ENCODE measurements at regions of chr2 and their contacts with region 1.

Region 1: GRCh38 chr2:61470965-61471904 is at the start of gene USP34:
- DNase-seq: peak; percentile 88
- H3K4me3 Mint-ChIP-seq: peak within 1 kb of the TSS; percentile 95
- H3K27ac Mint-ChIP-seq: peak within 1 kb of the TSS; percentile 94
- H3K4me1 Mint-ChIP-seq: peaks cover 28% of the 10 kb centered on the region
- H3K27me3 Mint-ChIP-seq: no peaks in the 10 kb centered on the region
- total RNA-seq, gene USP34: 91.3 and 98.1 TPM in 2 replicates

Region 2: DNA sequence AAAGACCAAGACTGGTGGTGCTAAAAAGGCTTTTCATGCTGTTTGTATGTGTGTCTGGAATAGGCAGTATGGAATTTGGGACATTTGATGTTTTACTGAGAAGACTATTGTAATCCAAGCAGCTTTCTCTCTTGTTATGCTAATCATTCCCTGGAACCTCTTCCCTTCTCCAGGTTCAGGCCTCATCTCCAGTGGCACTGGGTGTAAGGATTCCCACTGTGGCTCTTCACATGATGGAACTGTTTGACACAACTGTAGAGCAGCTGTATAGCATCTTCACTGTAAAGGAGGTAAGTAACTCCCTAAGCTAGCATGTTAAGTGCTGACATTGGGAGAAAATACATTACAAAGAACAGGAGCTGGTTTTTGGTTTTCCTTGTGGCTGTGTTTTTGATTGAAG is 285.9 kb before region 1 on chr2:
- intact Hi-C with region 1: no loop called
- DNase-seq: no peak
- H3K4me3 Mint-ChIP-seq: no peak overlapping the region
- H3K27ac Mint-ChIP-seq: no peak overlapping the region
- H3K4me1 Mint-ChIP-seq: peaks cover 46% of the 10 kb centered on the region
- H3K27me3 Mint-ChIP-seq: no peaks in the 10 kb centered on the region

Region 3: DNA sequence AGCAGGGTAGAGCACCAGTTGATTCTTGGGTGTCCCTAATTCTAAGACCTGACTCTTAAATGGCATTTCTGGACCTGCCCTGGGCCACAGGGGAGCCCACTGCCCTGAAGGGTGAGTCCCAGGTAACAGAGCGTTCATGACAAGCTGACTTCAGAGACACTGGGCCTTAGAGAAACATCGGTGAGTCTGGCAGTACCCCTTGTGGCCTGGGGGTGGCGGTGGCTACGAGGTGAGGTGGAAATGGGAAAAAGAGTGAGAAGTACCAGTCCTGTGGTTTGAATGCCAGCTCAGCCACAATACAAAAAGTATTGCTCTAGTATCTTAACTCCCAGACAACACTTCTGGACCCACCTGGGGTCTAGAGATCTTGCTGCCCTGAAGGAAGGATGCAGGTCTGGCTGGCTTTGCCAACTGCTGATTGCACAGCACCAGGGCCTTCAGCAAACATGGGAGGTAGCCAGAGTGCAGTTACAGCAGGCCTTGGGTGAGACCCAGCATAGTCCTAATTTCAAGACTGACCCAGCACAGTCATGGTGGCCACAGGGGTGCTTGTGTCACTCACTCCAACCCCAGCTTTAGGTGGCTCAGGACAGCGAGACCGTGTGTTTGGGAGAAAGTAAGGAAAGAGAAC is 44.9 kb before region 1 on chr2:
- intact Hi-C with region 1: loop called (anchors 1 kb)
- DNase-seq: peak; percentile 44
- H3K4me3 Mint-ChIP-seq: no peak overlapping the region
- H3K27ac Mint-ChIP-seq: peak overlapping the region; percentile 26
- H3K4me1 Mint-ChIP-seq: peaks cover 31% of the 10 kb centered on the region
- H3K27me3 Mint-ChIP-seq: no peaks in the 10 kb centered on the region

Region 4: GRCh38 chr2:61454383-61454782 is 16.9 kb before region 1 on chr2:
- intact Hi-C with region 1: loop called (anchors 2 kb)
- DNase-seq: no peak
- H3K4me3 Mint-ChIP-seq: no peak overlapping the region
- H3K27ac Mint-ChIP-seq: no peak overlapping the region
- H3K4me1 Mint-ChIP-seq: peaks cover 21% of the 10 kb centered on the region
- H3K27me3 Mint-ChIP-seq: no peaks in the 10 kb centered on the region

Region 5: DNA sequence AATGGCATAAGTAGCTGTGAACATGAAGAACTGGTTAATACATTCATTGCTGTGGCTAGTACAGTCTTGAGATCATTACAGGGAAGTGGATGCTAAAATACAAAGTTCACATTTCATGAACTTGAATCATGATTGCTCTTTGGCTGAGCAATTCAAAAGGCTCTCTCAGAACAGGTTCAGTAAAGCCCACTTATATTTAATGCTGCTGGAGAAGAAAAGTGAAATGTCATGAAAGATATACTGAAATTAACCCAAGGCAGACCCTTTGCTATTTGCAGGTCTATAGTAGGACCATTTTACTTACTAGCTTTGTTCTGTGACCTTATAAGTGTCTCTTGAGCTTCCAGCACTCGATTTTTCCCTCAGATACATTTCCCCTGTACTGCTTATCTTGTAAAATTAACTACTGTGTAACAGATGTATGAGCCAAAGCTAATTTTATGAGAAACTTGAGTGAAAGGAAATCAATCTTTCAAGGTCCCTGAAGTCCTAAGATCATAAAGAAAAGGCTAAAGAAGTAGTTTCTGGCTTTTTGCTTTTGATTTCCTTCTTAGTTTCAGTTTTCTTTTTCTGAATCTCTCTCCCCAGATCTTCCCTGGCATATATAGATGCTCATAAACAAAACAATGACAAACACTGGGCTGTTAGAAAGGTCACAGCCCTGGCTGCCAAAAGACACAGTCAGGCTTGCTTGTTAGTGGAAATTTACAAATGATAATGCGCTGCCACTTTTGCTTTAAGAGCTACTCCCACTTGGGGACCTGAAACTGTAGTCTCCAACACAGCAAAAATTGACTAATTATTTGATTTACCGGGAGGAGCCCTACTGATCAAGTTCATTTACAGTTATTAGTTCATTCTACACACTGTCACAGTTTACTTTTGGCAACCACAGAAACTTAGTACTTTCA is 199.6 kb after region 1 on chr2:
- intact Hi-C with region 1: loop called (anchors 5 kb)
- DNase-seq: peak; percentile 22
- H3K4me3 Mint-ChIP-seq: peak overlapping the region; percentile 73
- H3K27ac Mint-ChIP-seq: peak overlapping the region; percentile 85
- H3K4me1 Mint-ChIP-seq: peaks cover 19% of the 10 kb centered on the region
- H3K27me3 Mint-ChIP-seq: peaks cover 7% of the 10 kb centered on the region

Region 6: GRCh38 chr2:61694312-61695274 is 223.4 kb after region 1 on chr2:
- intact Hi-C with region 1: loop called (anchors 1 kb)
- DNase-seq: peak; percentile 80
- H3K4me3 Mint-ChIP-seq: peak overlapping the region; percentile 89
- H3K27ac Mint-ChIP-seq: peak overlapping the region; percentile 76
- H3K4me1 Mint-ChIP-seq: peaks cover 14% of the 10 kb centered on the region
- H3K27me3 Mint-ChIP-seq: peaks cover 2% of the 10 kb centered on the region

Measured in activated T-helper 1 cell treated with anti-CD3 and anti-CD28 coated beads, Interleukin-12 subunit alpha, Interleukin-12 subunit beta, Interleukin-2, Interleukin-4 antibody, amounts not matched to agents 30 ng/mL and 10 ng/mL and 1 ng/mL, durations not matched to agents 14 hours and 24 hours and 36 hours (primary cell).